OCI-LY7 (cell line): ENCODE measurements at regions of chr3 and their contacts with region 1.

Region 1: GRCh38 chr3:27467545-27467944 is 16.6 kb downstream of the SLC4A7 start:
- DNase-seq: peak; percentile 47
- H3K4me3 ChIP-seq: no peak overlapping the region
- H3K27ac ChIP-seq: no peak overlapping the region
- H3K4me1 ChIP-seq: no peaks in the 10 kb centered on the region
- CTCF ChIP-seq: peak; percentile 82

Region 2: DNA sequence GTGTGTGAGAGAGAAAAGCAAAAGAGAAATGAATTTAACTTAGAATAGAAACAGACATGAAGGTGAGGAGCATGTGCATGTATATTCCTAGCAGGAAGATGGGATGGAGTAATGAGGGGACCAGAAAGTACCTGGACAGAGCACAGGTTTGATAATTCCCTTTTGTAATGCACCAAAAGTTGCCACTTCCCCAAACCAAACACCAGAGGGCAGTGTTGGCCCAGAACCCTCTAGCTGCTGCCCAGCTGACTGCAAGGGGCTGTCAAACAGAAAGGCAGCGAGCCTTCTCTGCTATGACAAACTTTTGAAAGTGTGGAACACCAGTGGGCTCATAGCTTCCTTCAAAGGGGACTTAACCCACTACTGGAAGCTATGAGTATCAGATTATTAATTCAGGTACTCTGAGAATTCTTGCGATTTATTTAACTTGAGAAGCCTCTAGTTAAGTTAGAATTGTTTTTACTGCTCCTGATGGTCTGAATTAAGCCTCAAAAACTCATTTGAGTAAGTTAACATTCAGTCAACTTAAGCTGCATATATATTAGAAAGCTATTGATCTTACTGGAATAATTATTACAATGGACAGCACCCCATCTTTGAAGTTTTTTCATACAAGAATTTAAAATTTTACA is 333.3 kb before region 1 on chr3:
- CTCF ChIA-PET with region 1: no interaction called
- POLR2A ChIA-PET with region 1: no interaction called
- intact Hi-C with region 1: loop called (anchors 2 kb)
- DNase-seq: peak; percentile 62
- H3K4me3 ChIP-seq: no peak overlapping the region
- H3K27ac ChIP-seq: no peak overlapping the region
- H3K4me1 ChIP-seq: no peaks in the 10 kb centered on the region
- CTCF ChIP-seq: peak; percentile 87

Region 3: GRCh38 chr3:27244374-27244773 is 223.2 kb before region 1 on chr3:
- CTCF ChIA-PET with region 1: no interaction called
- POLR2A ChIA-PET with region 1: no interaction called
- intact Hi-C with region 1: no loop called
- DNase-seq: no peak
- H3K4me3 ChIP-seq: no peak overlapping the region
- H3K27ac ChIP-seq: no peak overlapping the region
- H3K4me1 ChIP-seq: no peaks in the 10 kb centered on the region
- CTCF ChIP-seq: 0 out of 2 replicates have a peak, but pooled peaks have one; percentile 33

Region 4: GRCh38 chr3:27312044-27312668 is 155.4 kb before region 1 on chr3:
- CTCF ChIA-PET with region 1: no interaction called
- POLR2A ChIA-PET with region 1: no interaction called
- intact Hi-C with region 1: loop called (anchors 5 kb)
- DNase-seq: peak; percentile 48
- H3K4me3 ChIP-seq: no peak overlapping the region
- H3K27ac ChIP-seq: no peak overlapping the region
- H3K4me1 ChIP-seq: no peaks in the 10 kb centered on the region
- CTCF ChIP-seq: peak; percentile 82

Region 5: GRCh38 chr3:27357665-27358258 is 109.8 kb before region 1 on chr3:
- CTCF ChIA-PET with region 1: no interaction called
- POLR2A ChIA-PET with region 1: interaction called, 4 read pairs
- intact Hi-C with region 1: loop called (anchors 1 kb)
- DNase-seq: peak; percentile 64
- H3K4me3 ChIP-seq: no peak overlapping the region
- H3K27ac ChIP-seq: no peak overlapping the region
- H3K4me1 ChIP-seq: peaks cover 21% of the 10 kb centered on the region
- CTCF ChIP-seq: peak; percentile 86

Region 6: GRCh38 chr3:27454914-27455313 is 12.6 kb before region 1 on chr3:
- CTCF ChIA-PET with region 1: no interaction called
- POLR2A ChIA-PET with region 1: no interaction called
- intact Hi-C with region 1: no loop called
- DNase-seq: no peak
- H3K4me3 ChIP-seq: no peak overlapping the region
- H3K27ac ChIP-seq: no peak overlapping the region
- H3K4me1 ChIP-seq: no peaks in the 10 kb centered on the region
- CTCF ChIP-seq: no peak